ENCODE measurements at regions of chr10 and their contacts with region 1.

Region 1: DNA sequence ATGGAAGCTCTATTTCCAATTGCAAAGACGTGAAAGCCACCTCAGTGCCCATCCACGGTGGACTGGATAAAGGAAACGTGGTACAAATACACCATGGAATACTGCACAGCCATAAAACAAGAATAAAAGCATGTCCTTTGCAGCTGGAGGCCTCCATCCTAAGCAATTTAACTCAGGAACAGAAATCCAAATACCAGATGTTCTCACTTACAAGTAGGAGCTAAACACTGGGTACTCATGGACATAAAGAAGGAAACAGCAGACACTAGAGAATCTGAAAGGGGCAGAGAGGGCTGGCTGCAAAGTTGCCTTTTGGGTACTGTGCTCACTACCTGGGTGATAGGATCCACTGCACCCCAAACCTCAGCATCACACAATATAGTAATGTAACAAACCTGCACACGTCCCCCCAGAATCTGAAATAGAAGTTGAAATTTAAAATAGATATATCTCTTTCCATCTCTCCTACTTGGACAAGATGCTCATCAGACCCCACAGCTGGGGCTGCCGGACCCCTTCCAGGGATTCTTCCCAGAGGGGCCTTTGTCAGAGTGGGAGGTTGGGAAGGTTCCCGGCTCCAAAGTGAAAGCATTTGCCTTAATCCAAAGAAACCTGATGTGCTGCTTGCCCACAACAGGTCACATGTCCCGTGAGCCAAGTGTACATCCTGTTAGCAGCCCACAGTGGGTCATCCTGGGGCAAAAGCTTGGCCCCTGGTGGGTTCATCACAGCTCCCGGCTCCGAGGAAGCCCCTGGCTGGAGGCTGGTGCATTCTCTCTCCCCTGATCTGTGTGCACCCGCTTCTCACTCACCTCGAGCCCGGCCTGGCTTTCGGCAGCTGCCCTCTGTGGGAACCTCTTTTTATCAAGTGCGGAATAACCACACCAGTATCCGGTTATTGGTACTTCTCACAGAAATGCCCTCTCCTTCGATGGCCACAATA is 172.3 kb upstream of the PPP2R2D start:
- DNase-seq: peak in 1 of 10 donors; percentile 6
- H3K4me3 ChIP-seq: no peak overlapping the region
- H3K27ac ChIP-seq: no peak overlapping the region
- H3K27me3 ChIP-seq: peaks cover 0 to 5% (median 0%) of the 10 kb centered on the region in 45 donors
- CTCF ChIP-seq: no peak

Region 2: GRCh38 chr10:131701131-131701947 is 27.2 kb before region 1 on chr10:
- intact Hi-C with region 1: loop called in 1 of 2 experiments (anchors 1 kb)
- DNase-seq: peak in 2 of 10 donors; percentile 17 to 27
- H3K4me3 ChIP-seq: no peak overlapping the region
- H3K27ac ChIP-seq: no peak overlapping the region
- H3K27me3 ChIP-seq: peaks cover 0 to 46% (median 3%) of the 10 kb centered on the region in 45 donors
- CTCF ChIP-seq: no peak

Measured in dorsolateral prefrontal cortex (tissue), 120 donors.